ENCODE measurements at regions of chr6 and their contacts with region 1.

Region 1: DNA sequence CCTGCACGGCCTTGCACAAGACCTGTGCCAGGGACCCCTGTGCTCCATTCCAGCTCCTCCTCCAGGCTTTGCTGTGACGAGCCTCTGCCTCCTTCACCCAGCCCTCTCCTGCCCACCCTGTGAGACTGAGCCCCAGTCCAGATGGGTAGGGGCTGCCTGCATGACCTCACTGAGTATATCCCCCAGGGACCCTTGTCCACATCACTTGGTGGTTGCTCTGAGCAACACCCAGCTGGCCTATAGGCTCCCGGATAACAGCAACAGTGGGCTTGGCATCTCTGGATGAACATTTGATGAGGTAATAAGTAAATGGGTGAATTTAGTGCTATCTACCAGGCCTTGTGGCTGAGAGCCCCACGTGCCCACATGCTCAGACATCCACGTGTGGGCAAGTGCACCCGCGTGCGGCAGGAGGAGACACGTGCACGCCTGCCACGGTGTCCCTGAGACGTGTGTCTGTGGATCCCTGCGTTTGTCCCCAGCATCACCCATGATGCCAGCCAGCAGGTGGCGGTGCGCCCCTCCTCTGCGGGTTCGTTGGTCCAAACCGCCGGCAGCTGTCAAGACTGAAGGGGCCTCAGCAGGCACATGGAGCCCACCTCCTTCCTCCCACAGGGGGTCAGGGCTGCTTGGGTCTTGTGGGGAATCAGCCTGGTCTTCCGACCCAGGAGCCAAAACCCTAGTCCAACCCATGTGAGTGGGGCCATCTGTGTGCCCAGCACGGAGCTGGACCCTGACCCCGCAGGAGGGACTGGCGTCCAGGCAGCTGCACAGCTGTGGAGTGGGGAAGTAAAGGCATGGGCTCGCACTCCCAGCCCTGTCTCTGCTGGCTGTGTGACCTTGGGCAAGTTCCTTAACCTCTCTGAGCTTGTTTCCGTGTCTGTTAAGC is 45.9 kb downstream of the FGD2 start:
- DNase-seq: peak; percentile 89 to 98 (median 95)

Region 2: DNA sequence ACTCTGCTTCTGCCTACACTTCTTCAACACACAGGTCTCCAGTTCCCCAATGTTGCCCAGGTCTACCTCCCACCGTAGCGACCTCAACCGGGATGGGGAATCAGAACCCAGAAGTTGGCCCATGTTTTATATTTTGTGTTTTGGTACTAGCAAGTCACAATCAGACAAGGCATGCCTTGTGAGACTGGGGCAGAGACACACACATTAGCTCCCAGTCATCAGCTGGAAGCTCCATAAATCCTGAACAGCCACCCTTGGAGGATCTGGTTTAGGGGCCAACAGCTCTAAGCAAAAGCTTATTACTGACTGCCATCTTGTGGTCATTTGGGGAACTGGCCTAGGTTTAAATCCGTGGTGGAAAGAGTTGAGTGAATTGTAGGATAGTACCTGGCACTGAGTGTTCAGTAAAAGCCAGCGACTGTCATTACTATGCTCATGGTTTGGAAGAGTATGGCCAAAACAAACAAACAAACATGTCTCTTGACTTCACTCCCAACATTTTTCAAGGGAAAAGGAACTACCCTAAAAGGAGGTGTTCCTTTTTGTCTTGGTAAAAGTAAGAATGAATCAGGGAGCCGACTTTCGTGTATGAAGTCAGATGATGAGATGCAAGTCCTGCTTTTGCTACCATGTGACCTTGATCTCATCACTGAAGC is 159.1 kb after region 1 on chr6:
- intact Hi-C with region 1: loop called (anchors 5 kb)
- DNase-seq: peak in 40 of 42 donors; percentile 14 to 94 (median 76)